ENCODE measurements at regions of chr5 and their contacts with region 1.

Region 1: DNA sequence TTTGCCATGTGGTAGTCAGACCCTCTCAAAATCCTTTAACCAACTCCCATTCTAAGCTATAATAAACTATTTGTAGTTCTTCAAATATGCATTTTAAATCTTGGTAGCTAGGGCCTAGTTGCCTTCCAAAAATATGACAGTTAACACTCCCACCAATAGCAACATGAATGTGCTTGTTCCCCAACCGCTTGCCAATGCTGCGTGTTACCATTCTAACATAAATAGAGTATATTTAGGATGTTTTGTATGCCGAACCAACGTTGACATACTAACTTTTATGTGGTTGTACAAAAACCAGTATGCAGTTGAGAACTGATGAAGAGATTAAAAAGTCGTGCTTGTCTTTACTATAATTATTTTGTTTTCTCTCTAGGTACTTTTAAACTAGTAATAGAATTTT is 9.0 kb downstream of the UBE2B start:
- DNase-seq: no peak
- CTCF ChIP-seq: no peak

Region 2: GRCh38 chr5:134345996-134346395 is 34.4 kb before region 1 on chr5:
- CTCF ChIA-PET with region 1: no interaction called
- POLR2A ChIA-PET with region 1: no interaction called
- DNase-seq: no peak
- CTCF ChIP-seq: no peak

Region 3: GRCh38 chr5:134365604-134366003 is 14.7 kb before region 1 on chr5:
- CTCF ChIA-PET with region 1: interaction called, 10 read pairs
- POLR2A ChIA-PET with region 1: interaction called, 11 read pairs
- DNase-seq: no peak
- CTCF ChIP-seq: no peak